Uterus (tissue), 4 donors: ENCODE measurements at regions of chr13 and their contacts with region 1.

Region 1: DNA sequence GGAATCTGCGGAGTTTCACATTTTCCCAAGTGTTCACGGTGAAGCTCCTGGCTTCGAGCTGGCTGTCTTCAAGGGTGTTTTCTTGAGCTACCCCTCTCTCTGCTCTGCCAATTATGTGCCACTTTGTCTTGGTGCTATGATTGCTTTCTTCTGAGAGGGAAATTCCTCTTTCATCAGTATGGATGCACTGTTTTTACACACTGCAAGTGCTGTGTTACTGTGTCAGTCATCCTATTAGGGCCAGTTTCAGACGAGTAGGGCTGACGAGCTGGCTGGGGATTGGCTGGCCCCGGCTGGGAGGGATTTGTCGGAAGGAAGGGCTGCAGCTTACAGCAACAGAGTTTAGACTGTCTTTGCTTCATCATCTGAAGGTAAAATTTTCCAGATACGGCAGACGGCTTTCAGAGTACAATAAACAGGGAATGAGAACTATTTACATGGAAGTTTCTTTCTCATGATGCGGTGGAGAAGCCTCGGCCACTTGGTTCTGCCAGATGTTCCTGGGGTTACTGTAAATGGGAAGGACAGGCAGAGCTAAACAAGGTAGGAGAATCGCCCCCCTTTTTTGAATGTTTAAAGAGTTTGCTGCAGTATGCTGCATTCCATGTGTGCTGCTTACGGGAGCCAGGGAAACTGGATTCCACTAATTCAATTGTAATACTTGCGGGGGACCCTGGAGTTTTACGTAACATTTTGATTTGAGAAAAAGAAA is at the start of gene MBNL2:
- DNase-seq: peak; percentile 87 to 92
- H3K4me3 ChIP-seq: peak within 1 kb of the TSS; percentile 52 to 70
- H3K27ac ChIP-seq: peak within 1 kb of the TSS; percentile 93 to 97
- H3K4me1 ChIP-seq: no peaks in the 10 kb centered on the region
- H3K27me3 ChIP-seq: no peaks in the 10 kb centered on the region
- CTCF ChIP-seq: no peak
- POLR2A ChIP-seq: peak; percentile 73 to 88
- total RNA-seq, gene MBNL2: 50.7 to 115 (median 72.0) TPM

Region 2: GRCh38 chr13:97344265-97345175 is 122.4 kb after region 1 on chr13:
- intact Hi-C with region 1: loop called (anchors 10 kb)
- DNase-seq: peak; percentile 63 to 64
- H3K4me3 ChIP-seq: no peak overlapping the region
- H3K27ac ChIP-seq: peak overlapping the region in 1 of 2 donors; percentile 39
- H3K4me1 ChIP-seq: peaks cover 0 to 3% of the 10 kb centered on the region in 2 donors
- H3K27me3 ChIP-seq: no peaks in the 10 kb centered on the region
- CTCF ChIP-seq: peak; percentile 54 to 75 (median 68)
- POLR2A ChIP-seq: no peak